H1 (cell line): ENCODE measurements at regions of chr11 and their contacts with region 1.

Region 1: GRCh38 chr11:128290106-128290840 is 297.1 kb downstream of the ETS1 start:
- DNase-seq: peak in 1 of 2 experiments; percentile 60
- H3K4me3 ChIP-seq: no peak overlapping the region
- H3K27ac ChIP-seq: no peak overlapping the region
- H3K4me1 ChIP-seq: no peaks in the 10 kb centered on the region
- H3K27me3 ChIP-seq: no peaks in the 10 kb centered on the region
- CTCF ChIP-seq: peak in 2 of 3 experiments; percentile 72 to 78; a peak in 3 of 4 replicates
- EP300 ChIP-seq: no peak
- POLR2A ChIP-seq: no peak
- RAD21 ChIP-seq: peak; percentile 93 to 94

Region 2: DNA sequence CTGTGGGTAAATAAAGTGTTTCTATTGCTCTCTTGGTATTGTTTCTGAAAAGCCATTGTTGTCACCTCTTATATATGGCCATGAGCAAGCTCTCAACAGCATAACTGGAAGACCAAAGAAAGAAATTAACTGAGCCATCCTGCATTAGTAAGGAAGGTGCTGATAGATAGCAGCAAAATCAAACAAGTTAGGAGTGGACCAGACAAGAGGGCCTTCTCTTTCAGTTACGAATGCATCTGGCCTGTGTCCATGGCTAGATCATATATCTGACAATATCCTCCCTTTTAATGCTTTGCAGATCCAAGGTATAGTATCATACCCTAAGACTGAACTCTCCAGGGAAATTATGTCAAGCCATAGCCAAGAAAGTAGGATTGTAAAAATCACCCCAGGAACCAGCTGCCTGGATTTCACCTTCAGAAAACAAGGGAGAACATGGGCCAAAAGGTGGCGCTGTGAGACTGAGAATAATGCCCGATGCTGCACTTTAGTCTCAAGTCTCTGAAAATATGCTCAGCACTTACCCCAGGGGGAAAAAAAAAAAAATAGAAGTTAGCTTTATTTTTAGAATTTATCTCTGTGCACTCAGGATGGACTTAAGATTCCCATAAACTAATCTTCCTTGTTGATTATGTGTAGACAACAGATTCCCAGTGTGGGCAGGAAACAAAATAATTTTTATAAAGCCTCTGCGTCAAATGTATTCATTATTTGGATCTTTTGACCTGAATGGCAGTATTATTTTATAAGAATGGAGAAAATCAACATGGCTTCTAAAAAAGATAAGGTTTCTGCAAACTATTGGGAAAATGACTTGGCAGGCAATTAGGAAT is 118.0 kb before region 1 on chr11:
- CTCF ChIA-PET with region 1: interaction called, 13 read pairs
- POLR2A ChIA-PET with region 1: no interaction called
- DNase-seq: peak in 1 of 2 experiments; percentile 85
- H3K4me3 ChIP-seq: no peak overlapping the region
- H3K27ac ChIP-seq: no peak overlapping the region
- H3K4me1 ChIP-seq: peaks cover 2 to 6% (median 3%) of the 10 kb centered on the region in 4 experiments; a peak in 6 of 7 replicates
- H3K27me3 ChIP-seq: no peaks in the 10 kb centered on the region; a peak in 1 of 7 replicates
- CTCF ChIP-seq: peak; percentile 53 to 82 (median 70)
- EP300 ChIP-seq: no peak
- POLR2A ChIP-seq: no peak
- RAD21 ChIP-seq: peak; percentile 90 to 93

Region 3: DNA sequence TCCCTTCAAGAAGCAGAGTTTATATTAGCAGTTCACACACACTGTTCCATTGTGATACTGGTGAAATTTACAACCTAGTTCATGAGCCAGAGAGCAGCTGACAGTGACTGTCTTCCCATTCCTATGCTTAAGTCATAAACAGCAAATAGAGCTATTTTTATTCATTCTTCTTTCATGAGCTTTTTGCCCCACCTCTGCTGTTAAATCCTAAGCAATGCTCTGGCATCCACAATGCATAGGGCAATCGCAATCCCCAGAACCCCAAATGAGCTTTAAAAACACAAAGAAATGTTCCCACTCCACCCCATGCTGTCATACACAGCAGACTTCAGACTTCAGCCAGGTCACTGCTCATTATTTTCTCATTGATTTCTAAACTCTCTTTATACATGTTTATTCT is 10.4 kb before region 1 on chr11:
- CTCF ChIA-PET with region 1: interaction called, 14 read pairs
- POLR2A ChIA-PET with region 1: no interaction called
- DNase-seq: no peak
- H3K4me3 ChIP-seq: no peak overlapping the region
- H3K27ac ChIP-seq: no peak overlapping the region
- H3K4me1 ChIP-seq: no peaks in the 10 kb centered on the region
- H3K27me3 ChIP-seq: no peaks in the 10 kb centered on the region
- CTCF ChIP-seq: no peak
- EP300 ChIP-seq: no peak
- POLR2A ChIP-seq: no peak
- RAD21 ChIP-seq: no peak

Region 4: GRCh38 chr11:128624269-128625175 is 334.2 kb after region 1 on chr11:
- CTCF ChIA-PET with region 1: interaction called, 133 read pairs
- POLR2A ChIA-PET with region 1: no interaction called
- DNase-seq: peak in 1 of 2 experiments; percentile 43
- H3K4me3 ChIP-seq: no peak overlapping the region
- H3K27ac ChIP-seq: no peak overlapping the region
- H3K4me1 ChIP-seq: peaks cover 2 to 8% (median 3%) of the 10 kb centered on the region in 4 experiments; a peak in 6 of 7 replicates
- H3K27me3 ChIP-seq: peaks cover 0 to 3% (median 0%) of the 10 kb centered on the region in 4 experiments; a peak in 4 of 7 replicates
- CTCF ChIP-seq: no peak
- EP300 ChIP-seq: no peak
- POLR2A ChIP-seq: no peak
- RAD21 ChIP-seq: no peak